Activated CD4-positive, alpha-beta memory T cell treated with anti-CD3 and anti-CD28 coated beads for 36 hours (primary cell): ENCODE measurements at regions of chr1 and their contacts with region 1.

Region 1: GRCh38 chr1:235415008-235415904 is 48.0 kb downstream of the TBCE start:
- DNase-seq: peak; percentile 74
- H3K4me3 Mint-ChIP-seq: no peak overlapping the region
- H3K27ac Mint-ChIP-seq: no peak overlapping the region
- H3K4me1 Mint-ChIP-seq: peaks cover 2% of the 10 kb centered on the region
- H3K27me3 Mint-ChIP-seq: no peaks in the 10 kb centered on the region

Region 2: GRCh38 chr1:234486498-234487448 is 928.5 kb before region 1 on chr1:
- CTCF ChIA-PET with region 1: interaction called, 3 read pairs
- POLR2A ChIA-PET with region 1: no interaction called
- intact Hi-C with region 1: loop called (anchors 5 kb)
- DNase-seq: peak; percentile 55
- H3K4me3 Mint-ChIP-seq: no peak overlapping the region
- H3K27ac Mint-ChIP-seq: peak overlapping the region; percentile 81
- H3K4me1 Mint-ChIP-seq: peaks cover 36% of the 10 kb centered on the region
- H3K27me3 Mint-ChIP-seq: peaks cover 16% of the 10 kb centered on the region

Region 3: DNA sequence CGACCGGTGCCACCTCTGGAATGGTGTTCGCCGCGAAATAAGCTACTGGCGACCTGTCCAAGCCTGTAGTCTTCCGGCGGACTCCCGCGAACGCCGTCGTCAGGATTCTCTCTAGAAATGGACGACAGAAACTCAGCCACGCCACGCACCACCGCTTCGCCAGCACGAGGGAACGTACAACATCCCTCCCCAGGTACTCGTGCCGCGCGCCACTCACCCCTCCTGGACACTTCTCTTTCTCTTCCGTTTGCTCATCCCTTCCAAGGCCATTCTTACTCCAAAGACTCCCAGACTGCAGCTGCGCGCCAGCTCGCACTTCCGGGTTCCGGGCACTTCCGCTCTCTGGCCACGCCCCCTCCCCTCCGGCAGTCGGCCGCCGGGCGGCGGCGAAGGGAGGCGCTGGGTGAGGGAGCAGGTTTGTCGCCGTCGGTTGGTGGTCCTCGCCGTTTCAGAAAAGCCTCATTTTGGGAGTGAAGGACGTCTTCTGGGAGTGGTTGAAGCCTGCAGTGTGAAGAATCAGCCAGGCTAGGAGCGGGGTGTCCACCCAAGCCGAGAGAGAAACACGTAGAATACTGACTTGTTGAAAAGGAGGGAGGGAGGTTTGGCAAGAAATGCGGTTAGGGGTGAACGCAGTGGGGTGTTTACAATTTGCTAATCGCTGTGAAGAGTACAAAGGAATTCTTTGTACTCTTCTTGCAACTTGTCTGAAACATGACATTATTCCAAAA is 254.1 kb before region 1 on chr1 and contains the start of gene RBM34:
- CTCF ChIA-PET with region 1: interaction called, 9 read pairs
- POLR2A ChIA-PET with region 1: no interaction called
- intact Hi-C with region 1: loop called (anchors 2 kb)
- DNase-seq: peak; percentile 96
- H3K4me3 Mint-ChIP-seq: peak within 1 kb of the TSS; percentile 95
- H3K27ac Mint-ChIP-seq: peak within 1 kb of the TSS; percentile 98
- H3K4me1 Mint-ChIP-seq: peaks cover 15% of the 10 kb centered on the region
- H3K27me3 Mint-ChIP-seq: no peaks in the 10 kb centered on the region
- total RNA-seq, gene RBM34: 108 to 120 TPM

Region 4: GRCh38 chr1:235246022-235246991 is 168.9 kb before region 1 on chr1:
- CTCF ChIA-PET with region 1: interaction called, 56 read pairs
- POLR2A ChIA-PET with region 1: interaction called, 3 read pairs
- intact Hi-C with region 1: no loop called
- DNase-seq: no peak
- H3K4me3 Mint-ChIP-seq: no peak overlapping the region
- H3K27ac Mint-ChIP-seq: no peak overlapping the region
- H3K4me1 Mint-ChIP-seq: peaks cover 36% of the 10 kb centered on the region
- H3K27me3 Mint-ChIP-seq: no peaks in the 10 kb centered on the region

Region 5: DNA sequence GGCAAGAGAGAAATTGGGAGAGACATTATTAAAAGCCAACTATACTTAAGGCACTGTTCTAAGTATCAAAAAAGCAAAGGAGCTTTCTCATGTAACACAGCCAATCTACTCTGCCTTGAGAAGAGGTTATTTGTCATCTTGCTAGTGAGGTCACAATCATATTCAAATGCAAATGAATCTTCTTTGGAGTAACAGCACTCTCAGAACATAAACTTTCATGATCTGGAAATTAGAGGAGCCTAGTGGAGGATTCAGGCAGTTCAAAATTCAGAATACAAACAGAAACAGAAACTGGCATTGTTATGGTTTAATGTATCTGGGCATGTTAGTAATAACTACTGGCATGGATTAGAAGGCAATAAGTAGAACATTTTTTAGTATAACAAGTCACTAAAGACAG is 144.6 kb before region 1 on chr1:
- CTCF ChIA-PET with region 1: interaction called, 11 read pairs
- POLR2A ChIA-PET with region 1: no interaction called
- intact Hi-C with region 1: no loop called
- DNase-seq: no peak
- H3K4me3 Mint-ChIP-seq: no peak overlapping the region
- H3K27ac Mint-ChIP-seq: peak overlapping the region; percentile 70
- H3K4me1 Mint-ChIP-seq: peaks cover 68% of the 10 kb centered on the region
- H3K27me3 Mint-ChIP-seq: no peaks in the 10 kb centered on the region

Region 6: GRCh38 chr1:235304549-235305451 is 110.5 kb before region 1 on chr1:
- CTCF ChIA-PET with region 1: no interaction called
- POLR2A ChIA-PET with region 1: no interaction called
- intact Hi-C with region 1: no loop called
- DNase-seq: peak; percentile 36
- H3K4me3 Mint-ChIP-seq: peak overlapping the region; percentile 49
- H3K27ac Mint-ChIP-seq: peak overlapping the region; percentile 87
- H3K4me1 Mint-ChIP-seq: peaks cover 51% of the 10 kb centered on the region
- H3K27me3 Mint-ChIP-seq: no peaks in the 10 kb centered on the region

Region 7: GRCh38 chr1:235442788-235443429 is 27.7 kb after region 1 on chr1:
- CTCF ChIA-PET with region 1: interaction called, 20 read pairs
- POLR2A ChIA-PET with region 1: no interaction called
- intact Hi-C with region 1: no loop called
- DNase-seq: no peak
- H3K4me3 Mint-ChIP-seq: no peak overlapping the region
- H3K27ac Mint-ChIP-seq: no peak overlapping the region
- H3K4me1 Mint-ChIP-seq: peaks cover 7% of the 10 kb centered on the region
- H3K27me3 Mint-ChIP-seq: no peaks in the 10 kb centered on the region

Region 8: DNA sequence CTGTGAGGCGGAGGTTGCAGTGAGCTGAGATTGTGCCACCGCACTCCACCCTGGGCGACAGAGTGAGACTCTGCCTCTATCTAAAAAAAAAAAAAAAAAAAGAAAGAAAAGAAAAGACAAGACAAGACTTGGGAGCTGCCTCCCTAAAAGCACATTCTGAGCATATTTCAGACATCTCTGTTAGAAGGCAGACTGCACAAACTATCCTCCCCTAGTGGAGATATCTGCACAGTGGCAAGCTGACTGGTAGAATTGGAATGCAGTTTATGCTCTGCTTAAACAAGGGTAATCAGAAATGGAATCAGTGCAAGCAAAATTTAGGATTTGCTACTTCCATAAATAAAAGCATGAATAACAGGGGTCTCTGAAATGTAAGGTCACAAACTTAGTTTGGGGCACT is 202.6 kb after region 1 on chr1:
- CTCF ChIA-PET with region 1: no interaction called
- POLR2A ChIA-PET with region 1: no interaction called
- intact Hi-C with region 1: no loop called
- DNase-seq: no peak
- H3K4me3 Mint-ChIP-seq: no peak overlapping the region
- H3K27ac Mint-ChIP-seq: no peak overlapping the region
- H3K4me1 Mint-ChIP-seq: no peaks in the 10 kb centered on the region
- H3K27me3 Mint-ChIP-seq: no peaks in the 10 kb centered on the region